ENCODE measurements at regions of chr6 and their contacts with region 1.

Region 1: GRCh38 chr6:112087136-112087911 is at the starts of genes FAM229B and TUBE1:
- DNase-seq: peak; percentile 95
- ATAC-seq: peak; percentile 98
- H3K4me3 Mint-ChIP-seq: no peak within 1 kb of the TSS
- H3K27ac Mint-ChIP-seq: no peak within 1 kb of the TSS
- H3K4me1 Mint-ChIP-seq: peaks cover 12% of the 10 kb centered on the region
- H3K27me3 Mint-ChIP-seq: peaks cover 6% of the 10 kb centered on the region
- CTCF ChIP-seq: no peak
- total RNA-seq, gene FAM229B: 7.6 to 10.2 TPM
- total RNA-seq, gene TUBE1: 38.7 to 39.1 TPM

Region 2: GRCh38 chr6:112076200-112076599 is 11.1 kb before region 1 on chr6:
- CTCF ChIA-PET with region 1: interaction called, 20 read pairs
- POLR2A ChIA-PET with region 1: interaction called, 4 read pairs
- intact Hi-C with region 1: no loop called
- DNase-seq: no peak
- ATAC-seq: no peak
- H3K4me3 Mint-ChIP-seq: no peak overlapping the region
- H3K27ac Mint-ChIP-seq: no peak overlapping the region
- H3K4me1 Mint-ChIP-seq: no peaks in the 10 kb centered on the region
- H3K27me3 Mint-ChIP-seq: no peaks in the 10 kb centered on the region
- CTCF ChIP-seq: no peak

Region 3: GRCh38 chr6:112153926-112154607 is 66.7 kb after region 1 on chr6:
- CTCF ChIA-PET with region 1: interaction called, 14 read pairs
- POLR2A ChIA-PET with region 1: no interaction called
- intact Hi-C with region 1: loop called (anchors 2 kb)
- DNase-seq: no peak
- ATAC-seq: peak; percentile 77
- H3K4me3 Mint-ChIP-seq: no peak overlapping the region
- H3K27ac Mint-ChIP-seq: peak overlapping the region; percentile 65
- H3K4me1 Mint-ChIP-seq: peaks cover 27% of the 10 kb centered on the region
- H3K27me3 Mint-ChIP-seq: peaks cover 2% of the 10 kb centered on the region
- CTCF ChIP-seq: no peak